HepG2 (cell line): ENCODE measurements at regions of chr20 and their contacts with region 1.

Region 1: GRCh38 chr20:53578492-53579222 is 15.0 kb downstream of the ZNF217 start:
- DNase-seq: peak; percentile 94
- ATAC-seq: peak; percentile 45
- H3K4me3 ChIP-seq: peak overlapping the region; percentile 12 to 43 (median 38); a peak in 4 of 6 replicates
- H3K27ac ChIP-seq: peak overlapping the region; percentile 77
- H3K4me1 ChIP-seq: peaks cover 63% of the 10 kb centered on the region
- H3K27me3 ChIP-seq: no peaks in the 10 kb centered on the region
- CTCF ChIP-seq: peak; percentile 93
- EP300 ChIP-seq: peak in 1 of 2 experiments; percentile 33; a peak in 1 of 4 replicates
- POLR2A ChIP-seq: peak in 1 of 2 experiments; percentile 34; a peak in 1 of 4 replicates
- RAD21 ChIP-seq: peak; percentile 96

Region 2: GRCh38 chr20:53425941-53426340 is 152.7 kb before region 1 on chr20:
- CTCF ChIA-PET with region 1: no interaction called
- POLR2A ChIA-PET with region 1: no interaction called
- in situ Hi-C with region 1: no loop called
- intact Hi-C with region 1: no loop called
- DNase-seq: peak; percentile 47
- ATAC-seq: peak; percentile 17; the same call in 1 of the 3 replicates
- H3K4me3 ChIP-seq: no peak overlapping the region
- H3K27ac ChIP-seq: no peak overlapping the region
- H3K4me1 ChIP-seq: peaks cover 32% of the 10 kb centered on the region
- H3K27me3 ChIP-seq: peaks cover 0 to 4% of the 10 kb centered on the region in 2 experiments; a peak in 1 of 5 replicates
- CTCF ChIP-seq: no peak
- EP300 ChIP-seq: peak in 1 of 2 experiments; percentile 17; a peak in 1 of 4 replicates
- POLR2A ChIP-seq: no peak
- RAD21 ChIP-seq: no peak

Region 3: DNA sequence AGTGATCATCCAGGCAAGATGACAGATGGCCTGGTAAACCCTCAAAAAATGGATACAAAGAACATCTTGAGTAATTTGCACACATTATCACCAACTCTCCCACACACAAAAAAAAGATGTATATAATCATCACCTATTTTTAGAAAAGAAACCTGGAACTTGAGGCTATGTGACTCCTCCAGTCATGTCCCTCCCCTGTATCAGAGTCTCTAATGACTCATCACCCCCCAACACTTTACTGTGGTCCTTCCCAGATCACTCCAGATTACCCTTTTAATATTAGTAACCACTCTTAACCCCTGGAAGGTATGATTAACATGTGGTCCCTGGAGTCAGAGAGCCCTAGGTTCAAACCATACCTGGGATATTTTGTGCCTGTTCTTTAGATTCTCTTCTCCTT is 129.8 kb before region 1 on chr20:
- CTCF ChIA-PET with region 1: no interaction called
- POLR2A ChIA-PET with region 1: no interaction called
- in situ Hi-C with region 1: no loop called
- intact Hi-C with region 1: no loop called
- DNase-seq: no peak
- ATAC-seq: no peak
- H3K4me3 ChIP-seq: no peak overlapping the region
- H3K27ac ChIP-seq: no peak overlapping the region
- H3K4me1 ChIP-seq: peaks cover 8% of the 10 kb centered on the region; the same call in 1 of the 2 replicates
- H3K27me3 ChIP-seq: no peaks in the 10 kb centered on the region
- CTCF ChIP-seq: no peak
- EP300 ChIP-seq: no peak
- POLR2A ChIP-seq: no peak
- RAD21 ChIP-seq: no peak

Region 4: GRCh38 chr20:53547664-53548239 is 30.9 kb before region 1 on chr20:
- CTCF ChIA-PET with region 1: no interaction called
- POLR2A ChIA-PET with region 1: interaction called, 12 read pairs
- in situ Hi-C with region 1: no loop called
- intact Hi-C with region 1: no loop called
- DNase-seq: peak; percentile 84
- ATAC-seq: peak; percentile 58
- H3K4me3 ChIP-seq: no peak overlapping the region
- H3K27ac ChIP-seq: no peak overlapping the region
- H3K4me1 ChIP-seq: peaks cover 51% of the 10 kb centered on the region
- H3K27me3 ChIP-seq: no peaks in the 10 kb centered on the region
- CTCF ChIP-seq: peak; percentile 96
- EP300 ChIP-seq: 0 out of 4 replicates have a peak, but pooled peaks of 1 of the 2 experiments have one; percentile 30
- POLR2A ChIP-seq: no peak
- RAD21 ChIP-seq: peak; percentile 98

Region 5: DNA sequence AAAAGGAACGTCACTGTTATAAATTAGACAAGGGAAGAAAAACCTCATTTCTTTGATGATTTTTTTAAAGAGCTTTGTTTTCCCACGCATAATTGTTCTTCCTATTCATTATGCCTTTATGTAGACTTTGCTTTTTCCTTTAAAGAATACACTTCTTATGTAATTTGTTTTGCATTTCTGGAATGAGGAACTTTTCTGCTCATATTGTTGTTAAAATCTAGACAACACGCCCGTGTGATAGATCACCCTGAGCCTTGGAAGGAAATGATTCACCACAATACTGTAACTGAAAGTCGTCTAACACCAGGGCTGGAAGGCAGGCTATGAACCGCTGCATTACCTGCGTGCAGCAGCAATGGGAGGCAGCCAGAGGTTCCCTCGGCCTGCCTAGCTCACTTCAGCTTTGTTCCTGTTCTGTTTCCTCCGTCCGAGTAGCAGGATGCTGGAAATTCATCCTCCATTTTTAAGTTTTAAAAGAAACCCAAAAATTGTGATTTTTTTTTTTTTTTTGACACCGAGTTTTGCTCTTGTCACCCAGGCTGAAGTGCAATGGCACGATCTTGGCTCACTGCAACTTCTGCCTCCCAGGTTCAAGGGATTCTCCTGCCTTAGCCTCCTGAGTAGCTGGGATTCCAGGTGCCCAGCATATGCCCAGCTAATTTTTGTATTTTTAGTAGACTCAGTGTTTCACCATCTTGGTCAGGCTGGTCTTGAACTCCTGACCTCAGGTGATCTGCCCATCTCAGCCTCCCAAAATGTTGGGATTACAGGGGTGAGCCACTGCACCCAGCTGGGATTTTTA is 64.6 kb after region 1 on chr20:
- CTCF ChIA-PET with region 1: interaction called, 3 read pairs
- POLR2A ChIA-PET with region 1: interaction called, 13 read pairs
- in situ Hi-C with region 1: no loop called
- intact Hi-C with region 1: loop called (anchors 2 kb)
- DNase-seq: no peak
- ATAC-seq: peak; percentile 77
- H3K4me3 ChIP-seq: peak overlapping the region; percentile 34 to 64 (median 48); a peak in 5 of 6 replicates
- H3K27ac ChIP-seq: peak overlapping the region; percentile 93
- H3K4me1 ChIP-seq: peaks cover 81% of the 10 kb centered on the region
- H3K27me3 ChIP-seq: no peaks in the 10 kb centered on the region
- CTCF ChIP-seq: no peak
- EP300 ChIP-seq: no peak; a peak in 1 of 4 replicates
- POLR2A ChIP-seq: peak in 1 of 2 experiments; percentile 77; a peak in 2 of 4 replicates
- RAD21 ChIP-seq: no peak

Region 6: DNA sequence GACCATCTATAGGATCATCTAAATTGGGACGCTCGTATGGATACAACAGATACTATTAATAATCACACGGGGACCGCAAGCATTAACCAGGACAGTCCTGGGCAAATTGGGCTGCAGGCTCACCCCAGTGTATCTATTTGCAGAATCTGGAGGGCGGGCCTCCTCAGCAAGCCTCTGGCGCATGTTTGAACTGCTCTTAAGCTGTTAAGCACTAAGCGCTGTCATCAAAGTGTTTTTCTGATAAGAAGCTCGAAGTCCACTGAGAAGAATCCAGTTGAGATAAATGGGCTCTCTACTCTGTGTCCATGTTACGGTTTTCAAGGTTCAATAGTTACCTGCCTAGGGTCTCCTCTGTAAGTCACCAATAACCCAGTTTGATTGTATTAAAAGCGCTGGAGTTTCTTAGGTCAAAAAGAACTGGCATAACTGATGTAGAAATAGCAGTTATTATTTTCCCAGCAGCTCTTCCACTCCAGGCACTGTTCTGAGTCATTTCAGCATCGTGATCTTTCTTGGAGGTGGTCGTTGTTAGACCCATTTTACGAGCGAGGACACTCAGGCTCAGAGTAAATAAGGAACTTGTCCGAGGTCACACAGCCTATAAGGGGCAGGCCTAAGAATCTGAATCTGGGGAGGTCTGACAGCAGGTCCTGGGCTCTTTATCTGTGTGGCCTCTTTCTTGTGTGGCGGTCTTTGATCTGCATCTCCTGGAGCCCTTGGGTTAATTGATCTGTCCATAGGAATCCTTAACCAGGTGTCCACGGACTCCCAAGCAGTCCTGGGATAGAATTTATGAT is 222.3 kb after region 1 on chr20:
- CTCF ChIA-PET with region 1: interaction called, 3 read pairs
- POLR2A ChIA-PET with region 1: interaction called, 10 read pairs
- in situ Hi-C with region 1: no loop called
- intact Hi-C with region 1: loop called (anchors 1 kb)
- DNase-seq: peak; percentile 100
- ATAC-seq: peak; percentile 95
- H3K4me3 ChIP-seq: peak overlapping the region; percentile 28 to 48 (median 44); a peak in 4 of 6 replicates
- H3K27ac ChIP-seq: peak overlapping the region; percentile 86
- H3K4me1 ChIP-seq: peaks cover 92% of the 10 kb centered on the region
- H3K27me3 ChIP-seq: no peaks in the 10 kb centered on the region
- CTCF ChIP-seq: 0 out of 2 replicates have a peak, but pooled peaks have one; percentile 20
- EP300 ChIP-seq: peak; percentile 95 to 99; a peak in 3 of 4 replicates
- POLR2A ChIP-seq: 0 out of 4 replicates have a peak, but pooled peaks have one; percentile 23 to 36
- RAD21 ChIP-seq: peak; percentile 56

Region 7: DNA sequence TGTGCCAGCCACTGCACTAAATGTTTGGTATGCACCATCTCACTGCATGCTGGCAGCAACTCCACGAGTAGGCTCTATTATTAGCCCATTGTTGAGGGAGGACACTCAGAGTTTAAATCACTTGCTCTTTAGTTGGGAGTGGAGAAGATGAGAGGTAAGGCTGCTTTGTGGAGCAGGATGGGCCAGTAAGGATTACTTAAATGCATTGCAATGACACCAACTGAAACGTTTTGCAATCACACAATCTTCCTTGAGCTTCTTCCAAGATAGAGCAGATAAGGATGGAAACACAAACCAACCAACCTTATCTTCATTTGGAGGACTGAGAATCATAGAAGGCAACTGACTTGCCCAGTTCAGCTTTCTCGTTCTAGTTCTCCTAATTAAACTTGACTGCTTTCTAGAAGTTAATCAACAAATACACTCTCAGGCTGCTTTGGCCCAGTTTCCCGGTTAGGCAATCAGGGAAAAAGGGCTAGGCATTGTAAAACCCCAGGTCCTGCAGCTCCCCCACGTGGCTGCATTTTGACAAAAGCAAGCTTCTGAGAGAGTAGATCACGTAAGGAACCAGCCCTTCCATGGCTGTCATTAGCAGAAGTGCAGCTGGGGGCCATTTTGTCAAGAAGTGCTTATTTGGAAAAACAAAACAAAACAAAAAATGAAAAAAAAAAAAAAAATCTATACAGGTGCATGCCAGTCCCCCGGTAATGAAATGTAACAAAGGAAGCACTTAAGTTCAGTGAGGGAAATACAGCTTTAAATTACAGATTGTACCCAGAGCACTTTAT is 361.1 kb after region 1 on chr20:
- CTCF ChIA-PET with region 1: interaction called, 107 read pairs
- POLR2A ChIA-PET with region 1: interaction called, 17 read pairs
- in situ Hi-C with region 1: loop called (anchors 5 kb)
- intact Hi-C with region 1: loop called (anchors 1 kb)
- DNase-seq: peak; percentile 95
- ATAC-seq: peak; percentile 91
- H3K4me3 ChIP-seq: no peak overlapping the region; a peak in 1 of 6 replicates
- H3K27ac ChIP-seq: no peak overlapping the region
- H3K4me1 ChIP-seq: peaks cover 83% of the 10 kb centered on the region
- H3K27me3 ChIP-seq: no peaks in the 10 kb centered on the region; a peak in 1 of 5 replicates
- CTCF ChIP-seq: peak; percentile 94
- EP300 ChIP-seq: no peak
- POLR2A ChIP-seq: no peak
- RAD21 ChIP-seq: peak; percentile 95

Region 8: GRCh38 chr20:54103067-54103761 is 524.6 kb after region 1 on chr20:
- CTCF ChIA-PET with region 1: no interaction called
- POLR2A ChIA-PET with region 1: no interaction called
- in situ Hi-C with region 1: loop called (anchors 10 kb)
- intact Hi-C with region 1: loop called (anchors 10 kb)
- DNase-seq: peak; percentile 96
- ATAC-seq: peak; percentile 63
- H3K4me3 ChIP-seq: peak overlapping the region in 2 of 3 experiments; percentile 24 to 39; a peak in 2 of 6 replicates
- H3K27ac ChIP-seq: peak overlapping the region; percentile 96
- H3K4me1 ChIP-seq: peaks cover 87% of the 10 kb centered on the region
- H3K27me3 ChIP-seq: no peaks in the 10 kb centered on the region
- CTCF ChIP-seq: peak; percentile 95
- EP300 ChIP-seq: peak; percentile 21 to 75; a peak in 3 of 4 replicates
- POLR2A ChIP-seq: no peak
- RAD21 ChIP-seq: peak; percentile 93